ENCODE measurements at regions of chr22 and their contacts with region 1.

Region 1: GRCh38 chr22:40728731-40729189 is 49.5 kb downstream of the MCHR1 start:
- DNase-seq: peak; percentile 69
- ATAC-seq: peak; percentile 67
- H3K4me3 Mint-ChIP-seq: peak overlapping the region; percentile 66
- H3K27ac Mint-ChIP-seq: peak overlapping the region; percentile 99
- H3K4me1 Mint-ChIP-seq: peaks cover 39% of the 10 kb centered on the region
- H3K27me3 Mint-ChIP-seq: no peaks in the 10 kb centered on the region

Region 2: GRCh38 chr22:40709752-40710413 is 18.9 kb before region 1 on chr22:
- POLR2A ChIA-PET with region 1: interaction called, 15 read pairs
- DNase-seq: no peak
- ATAC-seq: no peak
- H3K4me3 Mint-ChIP-seq: no peak overlapping the region
- H3K27ac Mint-ChIP-seq: no peak overlapping the region
- H3K4me1 Mint-ChIP-seq: peaks cover 13% of the 10 kb centered on the region
- H3K27me3 Mint-ChIP-seq: peaks cover 1% of the 10 kb centered on the region

Region 3: DNA sequence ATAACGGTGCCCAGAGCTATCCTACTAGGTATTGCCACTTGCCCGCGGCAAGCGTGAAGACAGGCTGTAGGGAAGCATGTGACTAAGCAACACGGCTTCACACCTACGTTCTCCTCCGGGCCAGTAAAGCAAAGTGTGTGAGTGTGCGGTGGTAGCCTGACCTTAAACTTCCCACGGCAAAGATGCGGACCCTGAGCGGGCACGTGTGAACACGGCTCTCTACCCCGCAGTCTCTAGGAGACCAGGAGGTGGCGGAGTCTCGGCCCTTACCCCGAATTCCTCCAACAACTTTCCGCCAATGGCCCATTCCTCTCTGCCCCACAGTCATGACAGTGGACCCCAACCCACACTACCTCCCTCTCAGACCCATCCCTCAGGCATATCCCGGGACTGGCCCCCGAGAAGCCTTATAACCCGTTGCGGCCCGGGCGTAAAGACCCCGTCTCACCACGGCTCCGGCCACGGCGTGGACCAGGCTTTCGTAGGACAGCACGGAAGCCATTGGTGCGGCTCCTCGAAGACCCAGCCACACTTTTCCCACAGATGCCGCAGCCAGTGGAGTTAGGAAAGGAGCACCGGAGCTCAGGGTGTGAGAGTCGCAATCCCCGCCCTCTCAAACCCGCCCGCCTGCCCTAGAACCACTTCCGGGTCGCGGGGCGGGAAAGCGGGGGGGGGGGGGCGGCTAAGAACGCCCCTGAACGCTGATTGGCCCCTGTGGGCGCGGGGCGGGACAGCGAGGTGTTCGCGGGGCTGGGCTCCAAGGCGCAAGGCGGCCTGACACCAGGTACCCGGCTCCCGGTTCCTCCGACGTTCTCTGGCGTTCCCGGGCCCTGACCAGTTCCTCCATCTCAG is 90.2 kb after region 1 on chr22 and contains the start of gene SLC25A17:
- POLR2A ChIA-PET with region 1: interaction called, 11 read pairs
- DNase-seq: peak; percentile 90
- ATAC-seq: peak; percentile 89
- H3K4me3 Mint-ChIP-seq: peak within 1 kb of the TSS; percentile 88
- H3K27ac Mint-ChIP-seq: peak within 1 kb of the TSS; percentile 80
- H3K4me1 Mint-ChIP-seq: peaks cover 21% of the 10 kb centered on the region
- H3K27me3 Mint-ChIP-seq: no peaks in the 10 kb centered on the region
- total RNA-seq, gene SLC25A17: 17.8 to 20.6 TPM

Measured in activated naive CD8-positive, alpha-beta T cell treated with anti-CD3 and anti-CD28 coated beads, Interleukin-2, amount 10 ng/mL, durations not matched to agents 7 days and 5 days (primary cell).